Activated B cell treated with CpG ODN at 0.5 μM for 24 hours (primary cell): ENCODE measurements at regions of chr12 and their contacts with region 1.

Region 1: DNA sequence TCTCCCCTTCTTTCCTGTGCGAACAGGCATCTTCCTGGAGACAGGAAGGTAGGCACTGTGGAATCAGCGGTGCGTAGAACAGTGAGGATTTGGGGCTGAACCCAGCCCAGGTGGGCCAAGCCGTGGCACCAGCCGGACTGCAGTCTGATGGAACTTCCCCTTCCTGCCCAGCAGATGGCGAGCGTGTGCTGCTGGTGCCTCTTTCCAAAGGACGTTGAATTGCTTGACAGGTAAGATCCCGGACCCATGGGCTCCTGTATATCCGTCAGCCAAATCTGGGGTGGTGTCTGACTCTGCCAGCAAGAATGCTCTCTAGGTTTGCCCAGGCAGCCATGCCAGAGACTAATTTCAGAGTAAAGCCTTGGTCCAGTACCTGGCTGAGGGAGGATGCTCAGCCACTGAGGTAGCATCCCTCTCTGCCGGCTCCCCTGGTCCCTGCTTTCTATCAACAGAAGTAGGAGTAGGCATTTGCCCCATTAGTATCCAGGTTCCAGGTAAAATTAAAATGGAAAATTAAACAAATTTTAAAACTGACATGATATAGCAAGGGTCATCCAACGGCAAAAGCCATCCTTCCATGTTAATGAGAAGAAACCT is 21.1 kb upstream of the KCNA5 start:
- DNase-seq: peak; percentile 49
- ATAC-seq: peak; percentile 82
- H3K4me3 Mint-ChIP-seq: no peak overlapping the region
- H3K27ac Mint-ChIP-seq: no peak overlapping the region
- H3K4me1 Mint-ChIP-seq: no peaks in the 10 kb centered on the region
- H3K27me3 Mint-ChIP-seq: peaks cover 26% of the 10 kb centered on the region
- CTCF ChIP-seq: peak; percentile 61

Region 2: GRCh38 chr12:5083955-5084849 is 61.6 kb after region 1 on chr12:
- CTCF ChIA-PET with region 1: interaction called, 162 read pairs
- POLR2A ChIA-PET with region 1: no interaction called
- intact Hi-C with region 1: loop called (anchors 1 kb)
- DNase-seq: no peak
- ATAC-seq: peak; percentile 57
- H3K4me3 Mint-ChIP-seq: no peak overlapping the region
- H3K27ac Mint-ChIP-seq: no peak overlapping the region
- H3K4me1 Mint-ChIP-seq: no peaks in the 10 kb centered on the region
- H3K27me3 Mint-ChIP-seq: no peaks in the 10 kb centered on the region
- CTCF ChIP-seq: no peak

Region 3: DNA sequence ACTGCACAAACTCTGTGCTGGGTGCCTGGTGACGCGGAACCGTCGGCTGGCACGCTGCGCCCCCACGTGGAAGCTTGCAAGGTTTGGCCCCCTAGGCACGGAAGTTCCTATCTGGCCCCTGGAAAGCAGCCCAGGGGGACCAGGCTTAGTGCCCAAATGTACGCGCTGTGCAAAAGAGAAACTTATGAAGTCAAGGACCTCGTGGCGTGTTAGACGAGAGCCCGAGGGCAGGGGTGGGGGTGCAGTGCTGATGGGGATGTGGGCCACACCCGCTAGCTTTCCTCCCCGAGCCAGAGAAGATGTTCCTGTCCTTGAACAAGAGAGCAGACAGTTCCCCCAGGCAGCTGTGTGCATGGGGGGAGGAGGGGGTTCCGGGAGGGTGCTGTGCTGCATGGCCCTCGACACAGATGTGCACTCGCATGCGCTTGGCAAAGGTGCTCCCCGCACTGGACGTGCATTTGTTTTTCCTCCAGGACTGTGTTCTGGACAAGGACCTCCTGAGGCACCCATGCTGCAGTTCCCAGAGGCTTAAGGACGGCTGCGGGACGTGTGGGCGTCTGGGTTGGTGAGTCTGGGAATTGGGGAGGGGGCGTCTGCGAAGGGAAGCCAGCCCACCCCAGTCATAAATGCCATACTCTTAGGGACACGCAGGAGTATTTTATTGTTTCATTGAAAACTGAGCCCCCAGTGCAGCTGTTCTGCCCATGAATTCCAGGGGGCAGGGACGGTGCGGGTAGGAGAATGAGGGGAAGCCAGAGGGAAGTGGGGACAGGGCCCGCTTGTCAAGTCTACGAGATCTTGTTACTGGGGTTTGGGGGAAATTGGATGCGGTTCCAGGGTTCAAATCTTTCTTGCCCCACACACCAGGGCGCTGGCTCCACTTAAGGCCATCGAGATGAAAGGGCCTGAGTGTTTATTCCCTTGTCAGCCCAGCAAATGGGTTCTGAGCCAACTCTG is 489.4 kb after region 1 on chr12:
- CTCF ChIA-PET with region 1: no interaction called
- POLR2A ChIA-PET with region 1: no interaction called
- intact Hi-C with region 1: loop called (anchors 5 kb)
- DNase-seq: no peak
- ATAC-seq: no peak
- H3K4me3 Mint-ChIP-seq: no peak overlapping the region
- H3K27ac Mint-ChIP-seq: no peak overlapping the region
- H3K4me1 Mint-ChIP-seq: no peaks in the 10 kb centered on the region
- H3K27me3 Mint-ChIP-seq: peaks cover 11% of the 10 kb centered on the region
- CTCF ChIP-seq: no peak